WTC11 (cell line): ENCODE measurements at regions of chr19 and their contacts with region 1.

Region 1: GRCh38 chr19:56155124-56155687 is 14.1 kb downstream of the ZNF444 start:
- DNase-seq: peak; percentile 78
- ATAC-seq: peak; percentile 70
- H3K4me3 Mint-ChIP-seq: no peak overlapping the region
- H3K27ac Mint-ChIP-seq: no peak overlapping the region
- H3K4me1 Mint-ChIP-seq: peaks cover 24% of the 10 kb centered on the region
- H3K27me3 Mint-ChIP-seq: no peaks in the 10 kb centered on the region
- CTCF ChIP-seq: peak; percentile 70

Region 2: DNA sequence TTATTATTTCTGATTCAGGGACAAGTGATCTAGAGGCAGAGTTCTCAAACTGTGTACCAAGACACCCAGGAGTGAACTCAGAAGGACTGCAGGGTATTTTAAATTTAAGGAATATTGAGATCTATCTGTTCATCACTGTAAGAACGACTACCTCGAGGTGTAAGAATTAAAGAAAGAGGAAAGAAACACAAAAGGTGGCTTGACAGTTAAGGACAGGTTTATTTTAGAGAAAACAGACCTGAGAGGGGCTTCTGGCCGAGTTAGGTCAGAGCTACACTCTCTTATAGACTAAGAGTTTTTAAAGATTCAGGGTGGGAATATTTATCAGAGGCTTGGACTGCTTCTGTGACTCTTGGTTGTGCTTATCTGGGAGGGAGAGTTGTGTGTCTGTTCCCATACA is 181.2 kb before region 1 on chr19:
- CTCF ChIA-PET with region 1: no interaction called
- POLR2A ChIA-PET with region 1: no interaction called
- DNase-seq: no peak
- ATAC-seq: no peak
- H3K4me3 Mint-ChIP-seq: no peak overlapping the region
- H3K27ac Mint-ChIP-seq: no peak overlapping the region
- H3K4me1 Mint-ChIP-seq: no peaks in the 10 kb centered on the region
- H3K27me3 Mint-ChIP-seq: peaks cover 17% of the 10 kb centered on the region
- CTCF ChIP-seq: no peak

Region 3: DNA sequence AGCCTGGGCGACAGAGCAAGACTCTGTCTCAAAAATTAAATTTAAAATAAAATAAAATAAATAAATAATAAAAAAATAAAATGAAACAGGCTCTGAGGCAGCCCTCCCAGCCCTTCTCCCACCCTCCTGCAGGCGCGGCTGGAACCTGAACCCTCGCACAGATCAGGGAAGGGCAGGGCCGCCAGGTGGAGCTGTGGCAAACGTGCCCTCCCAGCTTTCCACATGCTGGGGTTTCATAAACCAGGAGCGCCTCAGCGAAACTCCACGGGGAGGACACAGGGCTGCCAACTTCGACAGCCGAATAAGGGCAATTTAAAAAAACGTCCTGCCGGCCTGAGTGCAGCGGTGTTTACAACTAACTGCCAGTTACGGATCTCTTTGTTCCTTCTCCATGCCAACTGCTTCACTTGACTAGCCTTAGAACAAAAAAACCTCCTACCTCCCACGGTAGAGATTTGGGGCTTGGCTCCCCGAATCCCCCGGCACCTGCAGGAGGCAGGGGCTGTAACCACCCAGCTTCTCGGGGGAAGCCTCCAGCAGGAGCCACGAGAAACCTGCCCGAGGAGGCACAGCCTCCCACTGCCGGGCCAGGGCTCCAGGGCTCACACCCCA is 50.0 kb before region 1 on chr19:
- CTCF ChIA-PET with region 1: interaction called, 17 read pairs
- POLR2A ChIA-PET with region 1: no interaction called
- DNase-seq: peak; percentile 87
- ATAC-seq: peak; percentile 86
- H3K4me3 Mint-ChIP-seq: 0 out of 2 replicates have a peak overlapping the region, but pooled peaks have one; percentile 12
- H3K27ac Mint-ChIP-seq: peak overlapping the region; percentile 91
- H3K4me1 Mint-ChIP-seq: peaks cover 42% of the 10 kb centered on the region
- H3K27me3 Mint-ChIP-seq: no peaks in the 10 kb centered on the region
- CTCF ChIP-seq: peak; percentile 60

Region 4: DNA sequence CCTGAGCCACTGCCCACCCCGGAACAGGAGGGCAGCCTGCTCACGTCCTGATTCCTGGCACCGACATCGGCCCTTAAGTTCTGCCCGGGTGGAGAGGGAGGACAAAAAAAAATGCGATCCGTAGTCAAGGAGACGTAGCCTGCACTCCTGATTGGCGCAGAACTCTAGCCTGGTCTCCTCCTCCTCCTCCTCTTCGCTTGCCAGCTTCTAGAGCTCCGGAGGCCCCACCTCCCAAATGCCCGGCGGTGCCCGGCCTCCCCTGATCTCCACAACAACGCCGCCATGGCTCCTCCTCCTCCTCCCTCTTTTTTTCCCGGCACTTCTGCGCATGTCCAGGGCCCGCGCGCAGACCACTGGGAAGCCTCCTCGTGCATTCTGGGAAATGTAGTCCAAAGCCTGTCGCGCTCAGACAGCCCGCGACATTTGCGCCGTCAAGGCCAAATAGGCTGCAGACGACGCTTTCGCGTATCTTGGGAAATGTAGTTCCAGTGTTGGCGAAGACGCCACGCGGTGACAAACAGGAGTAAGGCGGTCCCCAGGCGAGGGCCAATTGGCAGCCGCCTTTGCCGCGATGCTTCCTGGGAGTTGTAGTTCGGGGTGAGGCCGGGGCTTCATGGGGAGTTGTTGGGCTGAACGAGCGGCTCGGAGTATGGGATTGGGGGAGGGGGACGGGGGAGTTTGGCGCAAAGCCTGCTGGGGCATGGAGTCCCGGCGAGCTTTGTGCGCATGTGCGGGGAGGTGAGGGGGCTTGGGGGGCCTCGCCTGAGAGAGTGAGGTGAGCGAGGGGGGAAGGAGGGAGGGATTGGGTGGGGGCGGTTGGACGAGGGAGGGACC is 14.4 kb before region 1 on chr19 and contains the start of gene ZNF444:
- CTCF ChIA-PET with region 1: interaction called, 25 read pairs
- POLR2A ChIA-PET with region 1: no interaction called
- DNase-seq: peak; percentile 99
- ATAC-seq: peak; percentile 93
- H3K4me3 Mint-ChIP-seq: peak within 1 kb of the TSS; percentile 79
- H3K27ac Mint-ChIP-seq: peak within 1 kb of the TSS; percentile 95
- H3K4me1 Mint-ChIP-seq: peaks cover 37% of the 10 kb centered on the region
- H3K27me3 Mint-ChIP-seq: peaks cover 3% of the 10 kb centered on the region; the same call in 1 of the 2 replicates
- CTCF ChIP-seq: no peak
- total RNA-seq, gene ZNF444: 84.0 to 87.9 TPM (median 87.7 TPM) in 3 replicates

Region 5: GRCh38 chr19:56189785-56190184 is 34.6 kb after region 1 on chr19:
- CTCF ChIA-PET with region 1: interaction called, 12 read pairs
- POLR2A ChIA-PET with region 1: no interaction called
- DNase-seq: no peak
- ATAC-seq: peak; percentile 39; the same call in 1 of the 2 replicates
- H3K4me3 Mint-ChIP-seq: no peak overlapping the region
- H3K27ac Mint-ChIP-seq: no peak overlapping the region
- H3K4me1 Mint-ChIP-seq: no peaks in the 10 kb centered on the region
- H3K27me3 Mint-ChIP-seq: peaks cover 7% of the 10 kb centered on the region
- CTCF ChIP-seq: no peak

Region 6: GRCh38 chr19:56252699-56253422 is 97.7 kb after region 1 on chr19:
- CTCF ChIA-PET with region 1: interaction called, 48 read pairs
- POLR2A ChIA-PET with region 1: interaction called, 3 read pairs
- DNase-seq: peak; percentile 96
- ATAC-seq: peak; percentile 97
- H3K4me3 Mint-ChIP-seq: no peak overlapping the region
- H3K27ac Mint-ChIP-seq: no peak overlapping the region
- H3K4me1 Mint-ChIP-seq: no peaks in the 10 kb centered on the region
- H3K27me3 Mint-ChIP-seq: peaks cover 12% of the 10 kb centered on the region; the same call in 1 of the 2 replicates
- CTCF ChIP-seq: peak; percentile 91

Region 7: DNA sequence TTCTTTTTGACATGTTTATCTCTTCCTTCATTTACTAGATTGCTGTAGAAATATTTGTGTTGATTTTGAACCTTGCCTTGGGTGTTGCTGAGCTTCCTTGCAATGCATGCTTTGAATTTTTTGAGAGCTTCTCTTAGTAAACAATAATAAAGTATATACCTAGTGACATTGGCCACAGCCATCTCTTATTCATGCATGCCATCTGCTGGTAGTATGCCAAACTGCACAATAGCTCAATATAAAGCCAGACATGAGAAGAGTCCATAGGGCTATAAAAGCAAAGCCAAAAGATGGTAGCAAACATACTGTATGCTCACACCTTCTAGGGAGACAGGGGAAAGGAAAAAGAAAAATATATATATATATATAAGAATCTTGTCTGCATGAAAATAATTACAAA is 178.3 kb after region 1 on chr19:
- CTCF ChIA-PET with region 1: interaction called, 22 read pairs
- POLR2A ChIA-PET with region 1: no interaction called
- DNase-seq: peak; percentile 37
- ATAC-seq: peak; percentile 73
- H3K4me3 Mint-ChIP-seq: no peak overlapping the region
- H3K27ac Mint-ChIP-seq: no peak overlapping the region
- H3K4me1 Mint-ChIP-seq: no peaks in the 10 kb centered on the region
- H3K27me3 Mint-ChIP-seq: peaks cover 14% of the 10 kb centered on the region
- CTCF ChIP-seq: peak; percentile 41; the same call in 1 of the 2 replicates